Posterior vena cava (tissue), 2 donors: ENCODE measurements at regions of chr7 and their contacts with region 1.

Region 1: GRCh38 chr7:98559958-98560357 is 57.1 kb upstream of the NPTX2 start:
- DNase-seq: peak; percentile 17

Region 2: GRCh38 chr7:98186452-98187137 is 373.4 kb before region 1 on chr7:
- intact Hi-C with region 1: no loop called
- DNase-seq: no peak

Region 3: GRCh38 chr7:98571986-98572385 is 12.0 kb after region 1 on chr7:
- intact Hi-C with region 1: no loop called
- DNase-seq: no peak

Region 4: DNA sequence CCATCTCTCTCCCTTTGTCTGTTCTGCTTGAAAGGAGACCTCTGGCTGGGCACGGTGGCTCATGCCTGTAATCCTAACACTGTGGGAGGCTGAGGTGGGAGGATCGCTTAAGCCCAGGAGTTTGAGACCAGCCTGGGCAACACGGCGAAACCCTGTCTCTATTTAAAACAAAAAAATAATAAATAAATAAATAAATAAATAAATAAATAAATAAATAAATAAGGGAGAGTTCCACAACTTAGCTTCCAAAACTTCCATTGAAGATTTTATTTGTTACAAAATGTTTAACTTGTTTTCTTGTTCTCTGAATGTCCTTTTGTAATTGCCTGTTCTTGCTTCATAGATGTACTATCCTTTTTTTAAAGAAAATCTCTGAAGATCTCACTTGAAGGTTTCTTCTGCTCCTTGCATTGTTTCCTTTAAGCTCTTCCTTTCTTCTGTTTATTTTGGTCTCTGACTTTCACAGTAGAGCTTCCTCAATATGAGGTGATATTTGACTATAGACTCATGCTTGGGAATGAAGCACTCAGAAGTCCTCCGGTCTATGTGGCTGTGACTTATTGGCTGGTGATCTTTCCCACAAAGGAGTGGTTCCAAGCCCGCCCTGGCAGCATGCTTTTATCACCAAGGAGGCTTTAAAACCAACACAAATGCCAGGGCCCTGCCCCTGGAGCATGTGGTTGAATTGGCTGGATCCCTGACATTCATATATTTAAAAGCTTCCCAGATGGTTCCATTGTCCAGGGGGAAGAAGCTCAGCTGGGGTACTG is 39.1 kb after region 1 on chr7:
- intact Hi-C with region 1: loop called in 1 of 2 experiments (anchors 1 kb)
- DNase-seq: no peak

Region 5: GRCh38 chr7:98878365-98879165 is 318.6 kb after region 1 on chr7 and contains the start of gene TRRAP:
- intact Hi-C with region 1: no loop called
- DNase-seq: peak; percentile 91
- total RNA-seq, gene TRRAP: 25.6 to 26.9 TPM